HAP-1 (cell line): ENCODE measurements at regions of chr15 and their contacts with region 1.

Region 1: DNA sequence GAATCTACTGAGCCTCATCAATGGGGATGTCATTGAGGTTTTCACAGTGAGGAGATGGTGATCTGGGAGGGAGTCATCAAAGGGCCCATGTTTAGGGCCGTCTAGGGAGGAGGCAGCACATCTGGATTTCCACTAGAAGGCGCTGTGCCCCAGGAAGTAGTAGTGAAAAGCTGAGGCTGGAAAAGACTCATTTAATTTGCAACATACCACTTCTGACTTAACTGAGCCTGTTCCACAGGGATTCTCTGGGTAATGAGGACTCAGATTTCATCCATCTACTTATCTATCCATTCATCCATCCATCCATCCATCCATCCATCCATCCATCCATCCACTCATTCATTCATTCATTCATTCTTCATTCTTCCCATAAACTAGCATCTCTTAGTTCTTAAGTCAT is 17.4 kb upstream of the SHF start:
- DNase-seq: peak; percentile 72 to 84
- H3K4me3 ChIP-seq: no peak overlapping the region
- H3K4me1 ChIP-seq: peaks cover 10% of the 10 kb centered on the region
- H3K27me3 ChIP-seq: 0 out of 2 replicates have a peak, but pooled peaks cover 3% of the 10 kb centered on the region

Region 2: GRCh38 chr15:45402162-45402954 is 197.2 kb after region 1 on chr15:
- in situ Hi-C with region 1: loop called (anchors 5 kb)
- DNase-seq: peak; percentile 97
- H3K4me3 ChIP-seq: peak overlapping the region; percentile 90
- H3K4me1 ChIP-seq: peaks cover 6% of the 10 kb centered on the region; the same call in 1 of the 2 replicates
- H3K27me3 ChIP-seq: no peaks in the 10 kb centered on the region

Region 3: DNA sequence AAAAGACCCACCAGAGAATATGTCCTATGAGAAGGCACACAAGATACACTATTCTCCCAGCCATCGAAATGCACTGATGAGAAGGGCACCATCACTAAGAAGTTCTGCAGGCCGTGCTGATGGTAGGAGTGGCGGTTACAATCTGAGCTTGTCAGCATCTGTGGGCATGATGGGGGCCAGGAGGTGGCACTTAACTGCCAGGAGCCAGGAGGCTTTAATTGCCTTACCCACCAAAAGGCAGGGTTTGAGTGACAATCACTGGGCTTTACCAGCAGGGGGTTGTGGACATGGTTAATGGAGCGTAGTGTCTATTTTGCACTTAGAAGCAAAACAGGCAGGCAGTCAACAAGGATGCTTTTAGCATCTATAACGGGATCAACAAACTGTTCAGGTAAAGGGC is 413.6 kb after region 1 on chr15:
- in situ Hi-C with region 1: no loop called
- DNase-seq: no peak
- H3K4me3 ChIP-seq: no peak overlapping the region
- H3K4me1 ChIP-seq: no peaks in the 10 kb centered on the region
- H3K27me3 ChIP-seq: no peaks in the 10 kb centered on the region

Region 4: DNA sequence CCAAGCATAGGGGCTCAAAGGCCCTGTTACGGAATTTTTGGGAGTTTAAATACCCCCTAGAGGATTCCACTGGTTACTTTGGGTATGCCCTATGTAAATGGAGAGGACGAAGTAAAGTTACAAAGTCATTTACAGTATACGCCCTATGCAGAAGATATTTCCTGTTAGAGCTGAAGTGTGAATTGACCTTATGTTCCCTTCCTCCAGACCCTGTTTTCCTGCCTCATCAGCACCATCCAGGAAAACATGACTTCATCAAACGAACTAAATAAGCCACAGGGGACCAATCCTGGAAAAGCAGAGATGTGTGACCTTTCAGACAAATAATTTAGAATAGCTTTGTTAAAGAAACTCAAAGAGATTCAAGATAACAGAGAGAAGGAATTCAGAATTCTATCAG is 607.0 kb after region 1 on chr15:
- in situ Hi-C with region 1: no loop called
- DNase-seq: no peak
- H3K4me3 ChIP-seq: no peak overlapping the region
- H3K4me1 ChIP-seq: no peaks in the 10 kb centered on the region
- H3K27me3 ChIP-seq: no peaks in the 10 kb centered on the region